HepG2 (cell line): ENCODE measurements at regions of chr5 and their contacts with region 1.

Region 1: GRCh38 chr5:39328731-39329130 is 35.6 kb downstream of the C9 start:
- DNase-seq: no peak
- ATAC-seq: no peak
- H3K4me3 ChIP-seq: no peak overlapping the region
- H3K27ac ChIP-seq: no peak overlapping the region
- H3K4me1 ChIP-seq: no peaks in the 10 kb centered on the region
- H3K27me3 ChIP-seq: no peaks in the 10 kb centered on the region
- CTCF ChIP-seq: no peak
- EP300 ChIP-seq: no peak
- POLR2A ChIP-seq: no peak
- RAD21 ChIP-seq: no peak

Region 2: GRCh38 chr5:40464511-40464910 is 1135.8 kb after region 1 on chr5:
- CTCF ChIA-PET with region 1: no interaction called
- POLR2A ChIA-PET with region 1: no interaction called
- in situ Hi-C with region 1: no loop called
- intact Hi-C with region 1: loop called (anchors 5 kb)
- DNase-seq: no peak
- ATAC-seq: no peak
- H3K4me3 ChIP-seq: no peak overlapping the region
- H3K27ac ChIP-seq: no peak overlapping the region
- H3K4me1 ChIP-seq: no peaks in the 10 kb centered on the region
- H3K27me3 ChIP-seq: no peaks in the 10 kb centered on the region
- CTCF ChIP-seq: no peak
- EP300 ChIP-seq: no peak
- POLR2A ChIP-seq: no peak
- RAD21 ChIP-seq: no peak